Naive thymus-derived CD4-positive, alpha-beta T cell (primary cell): ENCODE measurements at regions of chr3 and their contacts with region 1.

Region 1: DNA sequence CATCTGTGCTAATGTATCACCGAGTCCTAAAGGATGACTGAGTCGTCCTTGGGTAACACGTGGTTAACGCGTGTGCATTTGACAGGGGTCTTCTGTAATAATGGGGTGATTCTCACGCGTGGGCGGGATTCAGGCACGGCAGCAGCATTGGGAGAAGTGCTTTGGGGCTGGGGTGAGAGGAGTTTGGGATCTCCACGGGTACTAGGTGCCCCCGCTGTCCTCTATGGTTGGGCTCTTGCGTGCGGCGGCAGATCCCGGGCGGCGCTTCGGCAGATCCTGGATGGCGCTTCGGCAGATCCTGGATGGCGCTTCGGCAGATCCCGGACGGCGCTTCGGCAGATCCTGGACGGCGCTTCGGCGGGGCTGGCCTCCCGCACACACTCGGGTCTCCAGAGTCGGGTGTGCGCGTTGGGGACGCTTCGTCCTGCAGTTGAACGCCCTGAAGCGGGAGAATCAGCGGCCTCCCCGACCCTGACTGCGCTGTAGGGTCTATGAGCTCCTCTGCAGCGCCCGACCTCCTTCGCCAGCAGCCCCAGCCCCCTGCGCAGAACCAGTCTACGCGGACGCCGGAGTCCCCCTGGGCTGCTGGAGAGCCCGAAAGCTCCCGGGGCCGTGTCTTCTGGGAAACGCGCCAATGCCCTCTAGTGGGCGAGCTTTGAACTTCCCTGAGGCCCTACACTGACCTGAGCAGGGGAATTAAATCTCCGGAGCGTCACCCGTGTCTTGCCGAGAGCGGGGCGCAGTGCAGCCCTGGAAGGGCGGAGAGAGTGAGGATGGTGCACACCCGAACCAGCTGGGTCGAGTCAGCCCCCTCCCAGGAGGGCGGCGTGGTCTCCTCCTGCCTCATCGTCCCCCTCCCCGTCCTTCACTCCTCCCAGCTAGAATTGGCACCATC is 48.1 kb upstream of the EPHB3 start:
- DNase-seq: peak; percentile 59 to 83 (median 75)
- ATAC-seq: peak; percentile 99
- H3K4me3 ChIP-seq: peak overlapping the region; percentile 40
- H3K4me3 Mint-ChIP-seq: peak overlapping the region; percentile 12 to 81 (median 69)
- H3K27ac ChIP-seq: no peak overlapping the region
- H3K27ac Mint-ChIP-seq: no peak overlapping the region
- H3K4me1 ChIP-seq: no peaks in the 10 kb centered on the region
- H3K4me1 Mint-ChIP-seq: peaks cover 4 to 14% (median 11%) of the 10 kb centered on the region in 7 donors
- H3K27me3 ChIP-seq: peaks cover 0 to 4% of the 10 kb centered on the region in 2 donors
- H3K27me3 Mint-ChIP-seq: peaks cover 49 to 77% (median 63%) of the 10 kb centered on the region in 5 donors

Region 2: DNA sequence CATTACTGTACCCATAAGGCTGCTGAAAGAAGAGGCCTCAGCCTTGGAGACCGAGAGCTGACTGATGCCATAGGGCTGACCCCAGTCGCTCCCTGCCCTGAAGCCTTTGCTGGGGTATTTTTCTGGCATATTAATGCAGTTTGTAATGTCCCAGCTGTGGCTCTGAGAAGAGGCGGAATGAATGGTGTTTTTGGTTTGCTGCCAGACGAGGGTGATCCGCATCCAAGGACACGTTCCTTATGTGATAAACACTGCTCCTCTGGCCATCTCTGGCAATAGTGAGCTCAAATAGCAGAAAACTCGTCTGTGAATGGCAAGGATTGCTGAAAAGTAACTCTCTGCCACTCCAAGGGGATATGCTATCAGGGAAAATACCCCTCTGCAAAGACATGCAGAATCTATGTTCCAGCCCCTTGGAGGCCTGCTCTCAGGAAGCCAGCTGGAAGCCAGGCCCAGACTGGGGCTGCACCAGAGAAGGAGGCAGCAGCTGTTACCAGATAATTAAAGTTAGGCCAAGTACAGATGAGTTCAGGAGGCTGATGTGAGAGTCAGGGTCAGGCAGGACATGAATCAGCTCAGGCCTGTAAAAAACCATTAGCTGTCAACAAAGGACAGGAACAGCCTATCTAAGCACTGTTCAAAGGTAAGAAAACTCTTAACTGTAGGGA is 929.1 kb before region 1 on chr3:
- CTCF ChIA-PET with region 1: no interaction called
- POLR2A ChIA-PET with region 1: no interaction called
- intact Hi-C with region 1: no loop called
- DNase-seq: no peak
- ATAC-seq: no peak
- H3K4me3 ChIP-seq: no peak overlapping the region
- H3K4me3 Mint-ChIP-seq: peak overlapping the region in 1 of 10 donors; percentile 24
- H3K27ac ChIP-seq: no peak overlapping the region
- H3K27ac Mint-ChIP-seq: peak overlapping the region in 8 of 9 donors; percentile 37 to 89 (median 70)
- H3K4me1 ChIP-seq: peaks cover 11 to 33% of the 10 kb centered on the region in 2 donors
- H3K4me1 Mint-ChIP-seq: peaks cover 31 to 72% (median 56%) of the 10 kb centered on the region in 7 donors
- H3K27me3 ChIP-seq: no peaks in the 10 kb centered on the region
- H3K27me3 Mint-ChIP-seq: peaks cover 0 to 3% (median 0%) of the 10 kb centered on the region in 5 donors

Region 3: GRCh38 chr3:184354121-184354728 is 159.3 kb before region 1 on chr3:
- CTCF ChIA-PET with region 1: interaction called, 24 read pairs
- POLR2A ChIA-PET with region 1: no interaction called
- intact Hi-C with region 1: loop called in 1 of 2 experiments (anchors 1 kb)
- DNase-seq: peak; percentile 21 to 64 (median 48)
- ATAC-seq: peak; percentile 78
- H3K4me3 ChIP-seq: no peak overlapping the region
- H3K4me3 Mint-ChIP-seq: no peak overlapping the region
- H3K27ac ChIP-seq: no peak overlapping the region
- H3K27ac Mint-ChIP-seq: peak overlapping the region in 1 of 9 donors; percentile 55
- H3K4me1 ChIP-seq: peaks cover 0 to 7% of the 10 kb centered on the region in 2 donors
- H3K4me1 Mint-ChIP-seq: peaks cover 0 to 2% (median 0%) of the 10 kb centered on the region in 7 donors
- H3K27me3 ChIP-seq: no peaks in the 10 kb centered on the region
- H3K27me3 Mint-ChIP-seq: no peaks in the 10 kb centered on the region

Region 4: DNA sequence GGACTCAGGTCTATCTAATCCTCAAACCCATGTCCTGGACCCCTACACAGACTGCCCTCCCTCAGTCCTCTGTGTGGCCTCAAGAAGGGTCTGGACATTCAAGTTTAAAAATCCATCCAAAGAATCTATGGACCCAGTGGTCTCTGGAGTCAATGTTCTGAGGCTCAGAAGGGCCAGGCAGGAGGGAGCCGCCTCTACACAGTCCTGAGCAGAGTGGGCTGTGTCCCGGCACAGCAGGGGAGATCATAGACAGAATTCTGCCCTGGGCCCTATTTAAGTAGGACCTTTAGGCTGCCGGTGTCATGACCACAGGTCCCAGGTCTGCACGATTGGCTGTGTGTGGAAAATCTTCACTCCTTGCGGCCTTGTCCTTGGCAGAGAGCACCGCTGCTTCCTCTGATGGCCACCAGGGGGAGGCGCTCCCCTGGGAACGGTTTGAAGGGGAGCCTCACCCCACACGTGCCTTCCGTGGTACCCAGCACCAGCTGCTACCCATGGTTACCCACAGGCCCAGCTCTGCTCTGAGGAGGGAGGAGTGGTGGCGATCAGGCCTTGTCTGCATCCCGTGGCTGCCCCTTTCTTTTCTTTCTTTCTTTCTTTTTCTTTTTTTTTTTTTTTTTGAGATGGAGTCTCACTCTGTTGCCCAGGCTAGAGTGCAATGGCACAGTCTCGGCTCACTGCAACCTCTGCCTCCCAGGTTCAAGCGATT is 95.8 kb before region 1 on chr3:
- CTCF ChIA-PET with region 1: interaction called, 13 read pairs
- POLR2A ChIA-PET with region 1: interaction called, 4 read pairs
- intact Hi-C with region 1: loop called (anchors 1 kb)
- DNase-seq: peak; percentile 48 to 76 (median 70)
- ATAC-seq: peak; percentile 96
- H3K4me3 ChIP-seq: no peak overlapping the region
- H3K4me3 Mint-ChIP-seq: no peak overlapping the region
- H3K27ac ChIP-seq: no peak overlapping the region
- H3K27ac Mint-ChIP-seq: no peak overlapping the region
- H3K4me1 ChIP-seq: no peaks in the 10 kb centered on the region
- H3K4me1 Mint-ChIP-seq: no peaks in the 10 kb centered on the region
- H3K27me3 ChIP-seq: no peaks in the 10 kb centered on the region
- H3K27me3 Mint-ChIP-seq: peaks cover 0 to 6% (median 2%) of the 10 kb centered on the region in 5 donors

Region 5: GRCh38 chr3:184523825-184524615 is 10.5 kb after region 1 on chr3:
- CTCF ChIA-PET with region 1: interaction called, 27 read pairs
- POLR2A ChIA-PET with region 1: interaction called, 5 read pairs
- intact Hi-C with region 1: loop called (anchors 1 kb)
- DNase-seq: no peak
- ATAC-seq: peak; percentile 75
- H3K4me3 ChIP-seq: no peak overlapping the region
- H3K4me3 Mint-ChIP-seq: peak overlapping the region in 7 of 10 donors; percentile 31 to 92 (median 55)
- H3K27ac ChIP-seq: no peak overlapping the region
- H3K27ac Mint-ChIP-seq: peak overlapping the region in 2 of 9 donors; percentile 32 to 51
- H3K4me1 ChIP-seq: peaks cover 0 to 5% of the 10 kb centered on the region in 2 donors
- H3K4me1 Mint-ChIP-seq: peaks cover 0 to 22% (median 15%) of the 10 kb centered on the region in 7 donors
- H3K27me3 ChIP-seq: peaks cover 0 to 8% of the 10 kb centered on the region in 2 donors
- H3K27me3 Mint-ChIP-seq: peaks cover 2 to 57% (median 23%) of the 10 kb centered on the region in 5 donors